ENCODE measurements at regions of chr17 and their contacts with region 1.

Region 1: DNA sequence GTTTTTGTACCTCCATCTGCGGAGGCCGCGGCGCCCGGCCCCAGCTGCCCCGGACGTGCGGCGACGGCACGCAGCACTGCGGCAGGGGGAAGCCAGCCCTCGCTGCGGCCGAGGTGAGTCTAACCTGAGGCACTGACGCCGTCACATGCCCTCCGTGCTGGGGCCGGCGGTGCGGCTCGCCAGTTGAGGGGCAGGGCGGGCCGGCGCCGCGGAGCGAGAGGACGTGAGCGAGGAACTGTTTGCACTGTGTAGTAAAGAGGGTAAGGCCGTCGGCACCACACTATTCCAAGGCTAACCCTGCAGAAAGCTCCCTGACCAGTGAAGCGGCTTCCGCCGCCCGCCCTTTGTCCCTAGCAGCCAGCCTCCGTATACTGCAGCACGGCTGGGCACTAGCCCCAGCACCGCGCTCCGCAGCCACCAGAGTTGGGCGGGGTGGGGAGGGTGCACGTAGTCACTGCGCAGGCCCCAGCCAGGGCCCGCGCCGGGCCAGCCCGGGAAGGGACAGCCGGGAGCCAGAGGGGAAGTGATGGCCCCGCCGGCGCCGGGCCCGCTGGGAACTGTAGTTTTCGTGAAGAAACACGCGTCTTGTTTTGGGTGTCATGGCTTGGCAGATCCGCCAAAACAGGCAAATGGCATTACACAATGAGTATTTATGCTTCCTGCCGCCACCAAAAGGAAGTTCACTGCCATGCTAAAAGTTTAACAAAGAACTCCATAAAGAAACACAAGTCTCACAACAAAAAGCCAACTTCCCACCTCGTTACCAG is 580 bp upstream of the KANSL1 start:
- DNase-seq: peak; percentile 83 to 96 (median 94)
- ATAC-seq: peak; percentile 60 to 68
- H3K4me3 Mint-ChIP-seq: peak overlapping the region; percentile 79 to 99 (median 90)
- H3K27ac Mint-ChIP-seq: peak overlapping the region; percentile 85 to 100 (median 97)
- H3K4me1 Mint-ChIP-seq: peaks cover 28 to 72% (median 70%) of the 10 kb centered on the region in 4 donors
- H3K27me3 Mint-ChIP-seq: no peaks in the 10 kb centered on the region

Region 2: GRCh38 chr17:46044286-46044928 is 149.4 kb before region 1 on chr17:
- POLR2A ChIA-PET with region 1: interaction called, 10 read pairs
- DNase-seq: peak in 9 of 10 donors; percentile 33 to 78 (median 49)
- ATAC-seq: peak; percentile 73 to 77
- H3K4me3 Mint-ChIP-seq: no peak overlapping the region
- H3K27ac Mint-ChIP-seq: peak overlapping the region in 9 of 10 donors; percentile 10 to 86 (median 69)
- H3K4me1 Mint-ChIP-seq: peaks cover 11 to 27% (median 13%) of the 10 kb centered on the region in 4 donors
- H3K27me3 Mint-ChIP-seq: no peaks in the 10 kb centered on the region

Region 3: GRCh38 chr17:46108550-46109110 is 85.2 kb before region 1 on chr17:
- POLR2A ChIA-PET with region 1: no interaction called
- DNase-seq: no peak
- ATAC-seq: peak; percentile 28 to 42
- H3K4me3 Mint-ChIP-seq: peak overlapping the region in 5 of 10 donors; percentile 4 to 23 (median 7)
- H3K27ac Mint-ChIP-seq: peak overlapping the region in 9 of 10 donors; percentile 0 to 68 (median 31)
- H3K4me1 Mint-ChIP-seq: peaks cover 43 to 96% (median 86%) of the 10 kb centered on the region in 4 donors
- H3K27me3 Mint-ChIP-seq: no peaks in the 10 kb centered on the region

Region 4: GRCh38 chr17:46123607-46124006 is 70.2 kb before region 1 on chr17:
- POLR2A ChIA-PET with region 1: no interaction called
- DNase-seq: no peak
- ATAC-seq: no peak
- H3K4me3 Mint-ChIP-seq: peak overlapping the region in 3 of 10 donors; percentile 0 to 31 (median 8)
- H3K27ac Mint-ChIP-seq: peak overlapping the region in 5 of 10 donors; percentile 14 to 49 (median 36)
- H3K4me1 Mint-ChIP-seq: peaks cover 47 to 92% (median 89%) of the 10 kb centered on the region in 4 donors
- H3K27me3 Mint-ChIP-seq: no peaks in the 10 kb centered on the region

Region 5: DNA sequence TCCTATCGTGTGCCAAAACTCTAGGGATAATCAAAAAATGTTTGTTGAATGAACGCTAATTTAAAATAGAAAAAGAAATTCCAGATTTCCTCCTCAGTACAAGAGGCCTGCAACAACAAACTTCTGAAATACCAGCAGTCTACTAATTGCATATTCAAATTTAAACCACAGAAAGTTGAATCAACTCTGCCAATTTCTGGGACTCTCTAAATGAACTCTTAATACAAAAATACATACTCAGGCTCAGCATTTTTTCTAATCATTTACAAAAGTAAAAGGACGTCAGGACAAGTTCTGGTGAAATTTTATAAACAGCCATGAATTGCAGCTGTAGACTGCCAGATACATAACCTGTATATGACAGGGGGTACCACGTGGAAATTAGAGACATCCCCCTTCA is 49.6 kb before region 1 on chr17:
- POLR2A ChIA-PET with region 1: interaction called, 12 read pairs
- DNase-seq: no peak
- ATAC-seq: peak in 1 of 2 donors; percentile 14
- H3K4me3 Mint-ChIP-seq: peak overlapping the region in 5 of 10 donors; percentile 24 to 60 (median 37)
- H3K27ac Mint-ChIP-seq: peak overlapping the region in 7 of 10 donors; percentile 0 to 85 (median 20)
- H3K4me1 Mint-ChIP-seq: peaks cover 46 to 96% (median 90%) of the 10 kb centered on the region in 4 donors
- H3K27me3 Mint-ChIP-seq: no peaks in the 10 kb centered on the region

Region 6: DNA sequence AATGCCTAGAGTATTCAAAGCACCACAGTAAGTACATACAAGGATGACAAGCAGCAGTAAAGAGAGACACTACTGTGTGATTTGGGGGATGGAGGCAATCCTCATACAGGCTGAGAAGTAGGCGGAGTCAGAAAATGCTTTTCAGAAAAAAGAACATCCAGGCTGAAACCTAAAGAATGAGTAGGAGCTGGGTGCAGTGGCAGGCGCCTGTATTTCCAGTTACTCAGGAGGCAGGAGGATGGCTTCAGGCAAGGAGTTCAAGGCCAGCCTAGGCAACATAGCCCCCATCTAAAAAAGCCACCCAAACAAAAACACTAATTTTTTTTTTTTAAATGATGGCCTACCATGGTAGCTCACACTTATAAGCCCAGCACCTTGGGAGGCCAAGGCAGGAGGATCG is 10.8 kb before region 1 on chr17:
- POLR2A ChIA-PET with region 1: interaction called, 26 read pairs
- DNase-seq: no peak
- ATAC-seq: peak; percentile 21 to 42
- H3K4me3 Mint-ChIP-seq: peak overlapping the region; percentile 1 to 98 (median 60)
- H3K27ac Mint-ChIP-seq: peak overlapping the region in 9 of 10 donors; percentile 0 to 72 (median 45)
- H3K4me1 Mint-ChIP-seq: peaks cover 57 to 100% (median 97%) of the 10 kb centered on the region in 4 donors
- H3K27me3 Mint-ChIP-seq: no peaks in the 10 kb centered on the region

Region 7: GRCh38 chr17:46212634-46213435 is 19.0 kb after region 1 on chr17:
- POLR2A ChIA-PET with region 1: interaction called, 45 read pairs
- DNase-seq: peak; percentile 26 to 84 (median 70)
- ATAC-seq: peak; percentile 92 to 94
- H3K4me3 Mint-ChIP-seq: peak overlapping the region in 4 of 10 donors; percentile 0 to 37 (median 3)
- H3K27ac Mint-ChIP-seq: peak overlapping the region; percentile 30 to 93 (median 72)
- H3K4me1 Mint-ChIP-seq: peaks cover 15 to 50% (median 38%) of the 10 kb centered on the region in 4 donors
- H3K27me3 Mint-ChIP-seq: no peaks in the 10 kb centered on the region

Region 8: GRCh38 chr17:46274238-46274637 is 80.4 kb after region 1 on chr17:
- POLR2A ChIA-PET with region 1: no interaction called
- DNase-seq: no peak
- ATAC-seq: no peak
- H3K4me3 Mint-ChIP-seq: no peak overlapping the region
- H3K27ac Mint-ChIP-seq: no peak overlapping the region
- H3K4me1 Mint-ChIP-seq: peaks cover 0 to 7% (median 0%) of the 10 kb centered on the region in 4 donors
- H3K27me3 Mint-ChIP-seq: no peaks in the 10 kb centered on the region